ENCODE measurements at regions of chr20 and their contacts with region 1.

Region 1: GRCh38 chr20:49610701-49611538 is 43.0 kb upstream of the PTGIS start:
- DNase-seq: peak; percentile 98 to 100
- H3K4me3 ChIP-seq: peak overlapping the region; percentile 34
- H3K4me3 Mint-ChIP-seq: peak overlapping the region; percentile 76
- H3K27ac Mint-ChIP-seq: peak overlapping the region; percentile 5
- H3K4me1 ChIP-seq: peaks cover 7% of the 10 kb centered on the region
- H3K4me1 Mint-ChIP-seq: peaks cover 19% of the 10 kb centered on the region
- H3K27me3 ChIP-seq: no peaks in the 10 kb centered on the region
- H3K27me3 Mint-ChIP-seq: no peaks in the 10 kb centered on the region
- CTCF ChIP-seq: peak; percentile 100

Region 2: GRCh38 chr20:49541733-49542513 is 69.0 kb before region 1 on chr20:
- CTCF ChIA-PET with region 1: interaction called, 572 read pairs
- POLR2A ChIA-PET with region 1: no interaction called
- intact Hi-C with region 1: loop called (anchors 1 kb)
- DNase-seq: peak; percentile 88 to 89
- H3K4me3 ChIP-seq: no peak overlapping the region
- H3K4me3 Mint-ChIP-seq: no peak overlapping the region
- H3K27ac Mint-ChIP-seq: no peak overlapping the region
- H3K4me1 ChIP-seq: peaks cover 5% of the 10 kb centered on the region; the same call in 1 of the 2 replicates
- H3K4me1 Mint-ChIP-seq: peaks cover 11% of the 10 kb centered on the region
- H3K27me3 ChIP-seq: no peaks in the 10 kb centered on the region
- H3K27me3 Mint-ChIP-seq: no peaks in the 10 kb centered on the region
- CTCF ChIP-seq: peak; percentile 96 to 99

Region 3: GRCh38 chr20:49583669-49584417 is 27.1 kb before region 1 on chr20:
- CTCF ChIA-PET with region 1: interaction called, 57 read pairs
- POLR2A ChIA-PET with region 1: interaction called, 9 read pairs
- intact Hi-C with region 1: loop called (anchors 1 kb)
- DNase-seq: peak; percentile 97 to 99
- H3K4me3 ChIP-seq: no peak overlapping the region
- H3K4me3 Mint-ChIP-seq: peak overlapping the region; percentile 66
- H3K27ac Mint-ChIP-seq: peak overlapping the region; percentile 93
- H3K4me1 ChIP-seq: peaks cover 51% of the 10 kb centered on the region
- H3K4me1 Mint-ChIP-seq: peaks cover 29% of the 10 kb centered on the region
- H3K27me3 ChIP-seq: no peaks in the 10 kb centered on the region
- H3K27me3 Mint-ChIP-seq: no peaks in the 10 kb centered on the region
- CTCF ChIP-seq: peak; percentile 42 to 77

Region 4: GRCh38 chr20:49754596-49754995 is 143.7 kb after region 1 on chr20:
- CTCF ChIA-PET with region 1: no interaction called
- POLR2A ChIA-PET with region 1: no interaction called
- intact Hi-C with region 1: no loop called
- DNase-seq: no peak
- H3K4me3 ChIP-seq: no peak overlapping the region
- H3K4me3 Mint-ChIP-seq: no peak overlapping the region
- H3K27ac Mint-ChIP-seq: no peak overlapping the region
- H3K4me1 ChIP-seq: 0 out of 2 replicates have a peak, but pooled peaks cover 4% of the 10 kb centered on the region
- H3K4me1 Mint-ChIP-seq: peaks cover under 1% of the 10 kb centered on the region
- H3K27me3 ChIP-seq: no peaks in the 10 kb centered on the region
- H3K27me3 Mint-ChIP-seq: no peaks in the 10 kb centered on the region
- CTCF ChIP-seq: no peak

Region 5: GRCh38 chr20:49785852-49786175 is 174.9 kb after region 1 on chr20:
- CTCF ChIA-PET with region 1: no interaction called
- POLR2A ChIA-PET with region 1: no interaction called
- intact Hi-C with region 1: loop called (anchors 2 kb)
- DNase-seq: no peak
- H3K4me3 ChIP-seq: no peak overlapping the region
- H3K4me3 Mint-ChIP-seq: no peak overlapping the region
- H3K27ac Mint-ChIP-seq: no peak overlapping the region
- H3K4me1 ChIP-seq: peaks cover 23% of the 10 kb centered on the region
- H3K4me1 Mint-ChIP-seq: peaks cover 11% of the 10 kb centered on the region
- H3K27me3 ChIP-seq: no peaks in the 10 kb centered on the region
- H3K27me3 Mint-ChIP-seq: no peaks in the 10 kb centered on the region
- CTCF ChIP-seq: no peak

Region 6: GRCh38 chr20:49846206-49846807 is 235.4 kb after region 1 on chr20:
- CTCF ChIA-PET with region 1: interaction called, 55 read pairs
- POLR2A ChIA-PET with region 1: no interaction called
- intact Hi-C with region 1: loop called (anchors 1 kb)
- DNase-seq: peak; percentile 71 to 87
- H3K4me3 ChIP-seq: no peak overlapping the region
- H3K4me3 Mint-ChIP-seq: no peak overlapping the region
- H3K27ac Mint-ChIP-seq: no peak overlapping the region
- H3K4me1 ChIP-seq: no peaks in the 10 kb centered on the region
- H3K4me1 Mint-ChIP-seq: no peaks in the 10 kb centered on the region
- H3K27me3 ChIP-seq: no peaks in the 10 kb centered on the region
- H3K27me3 Mint-ChIP-seq: no peaks in the 10 kb centered on the region
- CTCF ChIP-seq: peak; percentile 87 to 92

Region 7: GRCh38 chr20:49928401-49929141 is 317.7 kb after region 1 on chr20:
- CTCF ChIA-PET with region 1: interaction called, 3 read pairs
- POLR2A ChIA-PET with region 1: no interaction called
- intact Hi-C with region 1: loop called (anchors 1 kb)
- DNase-seq: peak; percentile 90 to 96
- H3K4me3 ChIP-seq: no peak overlapping the region
- H3K4me3 Mint-ChIP-seq: no peak overlapping the region
- H3K27ac Mint-ChIP-seq: no peak overlapping the region
- H3K4me1 ChIP-seq: no peaks in the 10 kb centered on the region; the same call in 1 of the 2 replicates
- H3K4me1 Mint-ChIP-seq: peaks cover 2% of the 10 kb centered on the region
- H3K27me3 ChIP-seq: no peaks in the 10 kb centered on the region
- H3K27me3 Mint-ChIP-seq: no peaks in the 10 kb centered on the region
- CTCF ChIP-seq: peak; percentile 99